PC-9 (cell line): ENCODE measurements at regions of chr1 and their contacts with region 1.

Region 1: GRCh38 chr1:15304701-15305467 is 57.9 kb downstream of the FHAD1 start:
- DNase-seq: peak; percentile 35 to 44
- H3K4me3 ChIP-seq: no peak overlapping the region
- H3K27ac ChIP-seq: no peak overlapping the region
- H3K4me1 ChIP-seq: no peaks in the 10 kb centered on the region
- H3K27me3 ChIP-seq: no peaks in the 10 kb centered on the region
- CTCF ChIP-seq: peak; percentile 91

Region 2: GRCh38 chr1:14571819-14572767 is 732.8 kb before region 1 on chr1:
- CTCF ChIA-PET with region 1: no interaction called
- POLR2A ChIA-PET with region 1: no interaction called
- intact Hi-C with region 1: no loop called
- DNase-seq: no peak
- H3K4me3 ChIP-seq: no peak overlapping the region
- H3K27ac ChIP-seq: no peak overlapping the region
- H3K4me1 ChIP-seq: no peaks in the 10 kb centered on the region
- H3K27me3 ChIP-seq: peaks cover 9% of the 10 kb centered on the region
- CTCF ChIP-seq: no peak

Region 3: GRCh38 chr1:15038232-15039016 is 266.5 kb before region 1 on chr1:
- CTCF ChIA-PET with region 1: no interaction called
- POLR2A ChIA-PET with region 1: no interaction called
- intact Hi-C with region 1: loop called (anchors 5 kb)
- DNase-seq: peak; percentile 31 to 39
- H3K4me3 ChIP-seq: no peak overlapping the region
- H3K27ac ChIP-seq: no peak overlapping the region
- H3K4me1 ChIP-seq: no peaks in the 10 kb centered on the region
- H3K27me3 ChIP-seq: no peaks in the 10 kb centered on the region
- CTCF ChIP-seq: peak; percentile 55

Region 4: DNA sequence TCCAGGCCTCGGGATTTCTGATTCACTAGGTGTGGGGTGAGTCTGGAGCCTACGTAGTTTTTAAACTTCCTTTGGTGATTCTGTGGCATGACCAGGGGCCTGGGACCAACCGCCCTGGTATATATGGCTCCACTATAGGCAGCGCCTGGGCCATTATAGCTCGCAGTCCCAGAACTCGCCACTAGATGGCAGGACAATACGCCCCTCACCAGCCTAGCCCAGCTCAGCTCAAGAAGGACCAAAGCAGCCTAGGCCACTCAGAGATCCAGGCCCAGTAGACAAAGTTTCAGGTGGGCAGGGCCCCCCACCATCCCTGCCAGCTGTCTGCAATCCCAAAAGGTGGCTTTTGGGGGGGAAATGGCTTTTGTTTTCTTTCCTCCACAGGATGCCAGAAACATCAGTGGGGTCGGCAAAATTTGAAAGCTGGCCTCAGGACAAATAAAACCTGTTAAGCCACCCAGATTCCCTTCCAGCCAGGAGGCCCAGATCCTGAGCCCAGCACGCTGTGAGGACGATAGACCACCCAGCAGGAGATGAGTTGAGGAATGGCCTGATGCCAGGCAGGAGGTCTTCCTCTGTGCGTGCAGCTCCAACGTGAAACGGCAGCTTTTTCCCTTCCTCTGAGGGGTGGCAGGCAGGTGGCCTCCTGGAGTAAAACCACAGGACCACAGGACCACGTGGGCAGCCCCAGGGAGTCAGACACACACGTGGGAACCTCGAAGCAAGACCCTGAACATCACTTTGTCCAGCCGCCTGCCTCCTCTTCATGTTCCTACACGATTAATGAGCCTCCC is 176.2 kb before region 1 on chr1:
- CTCF ChIA-PET with region 1: interaction called, 3 read pairs
- POLR2A ChIA-PET with region 1: no interaction called
- intact Hi-C with region 1: loop called (anchors 1 kb)
- DNase-seq: peak in 1 of 2 experiments; percentile 73
- H3K4me3 ChIP-seq: no peak overlapping the region
- H3K27ac ChIP-seq: no peak overlapping the region
- H3K4me1 ChIP-seq: no peaks in the 10 kb centered on the region
- H3K27me3 ChIP-seq: no peaks in the 10 kb centered on the region
- CTCF ChIP-seq: peak; percentile 87

Region 5: DNA sequence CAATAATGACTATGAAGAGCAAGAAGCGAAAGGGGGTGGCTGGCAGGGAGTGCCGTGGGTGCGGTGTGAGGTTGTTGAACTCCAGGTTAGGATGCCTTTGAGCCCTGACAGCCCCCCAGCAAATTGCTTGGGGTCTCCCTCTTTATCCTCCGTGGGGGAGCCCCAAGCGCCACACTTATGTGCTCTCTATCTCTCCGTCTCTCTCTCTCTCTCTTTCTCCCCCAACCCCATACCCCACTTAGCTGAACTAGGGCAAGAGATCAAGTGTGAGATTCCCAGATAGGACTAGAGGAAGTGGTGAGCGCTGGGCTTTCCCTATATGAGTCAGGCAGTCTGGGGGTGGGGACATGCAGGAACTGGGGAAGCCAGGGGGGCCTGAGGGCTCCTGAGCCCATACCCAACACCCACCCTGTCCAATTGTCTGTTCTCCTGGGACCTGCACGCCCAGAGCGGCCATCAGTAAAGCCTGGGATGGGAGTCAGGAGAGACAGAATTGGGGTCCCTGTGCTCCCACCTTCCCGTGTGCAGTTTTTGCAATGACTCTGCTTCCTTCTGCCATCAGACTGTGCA is 112.6 kb after region 1 on chr1:
- CTCF ChIA-PET with region 1: no interaction called
- POLR2A ChIA-PET with region 1: no interaction called
- intact Hi-C with region 1: no loop called
- DNase-seq: peak; percentile 75 to 76
- H3K4me3 ChIP-seq: peak overlapping the region; percentile 39; the same call in 1 of the 2 replicates
- H3K27ac ChIP-seq: peak overlapping the region; percentile 87
- H3K4me1 ChIP-seq: peaks cover 43% of the 10 kb centered on the region
- H3K27me3 ChIP-seq: no peaks in the 10 kb centered on the region
- CTCF ChIP-seq: no peak